Panc1 (cell line): ENCODE measurements at regions of chr12 and their contacts with region 1.

Region 1: DNA sequence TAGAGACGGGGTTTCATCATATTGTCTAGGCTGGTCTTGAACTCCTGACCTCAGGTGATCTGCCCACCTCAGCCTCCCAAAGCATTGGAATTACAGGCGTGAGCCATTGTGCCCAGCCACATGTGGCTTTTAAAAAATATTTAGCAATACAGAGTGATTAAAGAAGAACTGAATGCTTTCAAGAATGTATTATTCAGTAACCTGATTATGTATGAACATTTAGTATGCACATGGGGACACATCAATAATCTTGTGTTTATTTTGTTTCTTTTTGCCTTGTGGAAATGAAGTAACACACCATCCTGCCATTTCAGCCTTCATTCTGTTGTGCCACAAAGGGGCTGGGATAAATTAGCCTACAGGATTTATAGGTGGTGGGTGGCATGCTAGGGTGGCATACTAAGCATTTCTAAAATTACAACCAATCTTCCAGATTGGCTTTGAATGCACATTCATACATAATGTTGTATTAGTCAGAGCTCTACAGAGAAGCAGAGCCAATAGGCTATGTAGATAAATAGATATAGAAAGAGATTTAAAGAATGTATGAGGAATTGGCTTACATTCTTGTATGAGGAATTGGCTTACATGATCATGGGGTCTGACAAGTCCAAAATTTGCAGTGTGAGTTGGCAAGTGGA is 25.5 kb upstream of the TXNRD1 start:
- DNase-seq: no peak
- ATAC-seq: peak; percentile 57; the same call in 1 of the 2 replicates
- H3K4me3 ChIP-seq: no peak overlapping the region
- H3K27ac ChIP-seq: no peak overlapping the region
- H3K4me1 ChIP-seq: no peaks in the 10 kb centered on the region
- H3K27me3 ChIP-seq: no peaks in the 10 kb centered on the region
- CTCF ChIP-seq: no peak

Region 2: DNA sequence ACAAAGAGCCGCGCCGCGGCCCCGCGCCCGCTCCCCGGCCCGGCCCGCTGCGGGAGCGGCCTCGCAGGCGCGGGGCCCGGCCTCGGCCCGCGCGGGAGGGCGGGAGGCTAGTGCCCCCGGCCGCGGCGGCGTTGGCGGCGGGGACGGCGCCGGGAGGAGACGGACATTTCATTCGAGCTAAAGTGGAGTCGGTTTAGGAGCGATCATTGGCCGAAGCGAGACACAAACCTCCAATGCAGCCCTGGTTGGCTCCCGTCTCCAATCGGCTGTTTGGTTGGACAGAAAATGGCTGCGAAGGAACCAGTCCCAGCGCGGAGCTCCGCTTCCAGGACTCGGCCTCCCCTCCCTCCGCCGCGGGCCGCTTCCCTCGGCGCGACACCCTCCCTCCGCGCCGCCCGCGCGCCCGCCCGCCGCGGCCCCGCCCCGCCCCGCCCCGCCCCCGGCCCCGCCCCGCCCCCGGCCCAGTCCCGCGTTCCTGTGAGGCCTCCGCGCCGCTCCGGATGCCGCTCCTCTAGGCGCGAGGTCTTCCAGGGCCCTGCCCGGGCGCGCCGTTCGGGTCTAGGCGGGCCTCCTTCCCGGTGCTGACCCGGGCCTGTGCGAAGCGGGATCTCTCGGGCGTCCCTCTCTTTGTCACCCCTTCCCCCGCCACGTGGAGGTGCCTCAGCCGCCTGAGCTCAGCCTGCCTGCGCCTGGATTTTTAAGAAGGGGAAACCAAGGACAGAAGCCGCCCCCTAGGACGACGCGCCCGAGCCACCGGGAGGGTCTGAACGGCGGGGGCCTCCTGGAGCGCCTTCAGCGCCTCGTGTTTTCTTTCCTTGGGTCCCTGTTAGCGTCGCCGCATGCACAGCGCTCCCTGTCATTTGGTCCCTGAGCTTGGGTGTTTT is 51.9 kb before region 1 on chr12 and contains the start of gene NFYB:
- CTCF ChIA-PET with region 1: no interaction called
- POLR2A ChIA-PET with region 1: no interaction called
- in situ Hi-C with region 1: no loop called
- intact Hi-C with region 1: no loop called
- DNase-seq: peak; percentile 42
- ATAC-seq: peak; percentile 98
- H3K4me3 ChIP-seq: peak within 1 kb of the TSS; percentile 66 to 82
- H3K27ac ChIP-seq: peak within 1 kb of the TSS; percentile 89
- H3K4me1 ChIP-seq: peaks cover 24% of the 10 kb centered on the region
- H3K27me3 ChIP-seq: no peaks in the 10 kb centered on the region; the same call in 1 of the 2 replicates
- CTCF ChIP-seq: no peak
- total RNA-seq, gene NFYB: 31.5 TPM

Region 3: DNA sequence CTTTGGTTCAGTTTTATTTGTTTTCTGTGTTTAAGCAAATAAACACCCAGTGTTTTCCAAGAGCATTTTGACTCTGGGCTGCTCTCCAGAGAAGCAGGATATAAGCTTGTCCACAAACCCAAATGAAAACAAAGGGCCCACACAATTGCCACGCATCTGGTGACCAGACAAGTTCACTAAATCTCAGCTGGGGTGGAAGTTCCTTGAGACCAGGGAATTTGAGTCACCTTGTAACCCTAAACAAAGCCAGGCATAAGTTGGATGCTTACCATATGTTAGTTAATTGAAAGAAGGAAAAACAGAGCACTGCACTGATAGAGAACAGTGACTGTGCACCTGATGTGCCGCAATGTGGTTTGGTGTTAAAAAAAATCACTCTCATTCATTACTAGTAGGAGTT is 23.9 kb after region 1 on chr12:
- CTCF ChIA-PET with region 1: no interaction called
- POLR2A ChIA-PET with region 1: no interaction called
- in situ Hi-C with region 1: no loop called
- intact Hi-C with region 1: no loop called
- DNase-seq: no peak
- ATAC-seq: peak; percentile 90
- H3K4me3 ChIP-seq: peak overlapping the region in 1 of 2 experiments; percentile 8; a peak in 1 of 4 replicates
- H3K27ac ChIP-seq: peak overlapping the region; percentile 99
- H3K4me1 ChIP-seq: peaks cover 34% of the 10 kb centered on the region
- H3K27me3 ChIP-seq: no peaks in the 10 kb centered on the region
- CTCF ChIP-seq: no peak

Region 4: GRCh38 chr12:104230304-104231095 is 40.5 kb after region 1 on chr12:
- CTCF ChIA-PET with region 1: no interaction called
- POLR2A ChIA-PET with region 1: interaction called, 14 read pairs
- in situ Hi-C with region 1: no loop called
- intact Hi-C with region 1: no loop called
- DNase-seq: no peak
- ATAC-seq: no peak
- H3K4me3 ChIP-seq: no peak overlapping the region
- H3K27ac ChIP-seq: no peak overlapping the region
- H3K4me1 ChIP-seq: no peaks in the 10 kb centered on the region
- H3K27me3 ChIP-seq: no peaks in the 10 kb centered on the region
- CTCF ChIP-seq: no peak